Uterus (tissue), 4 donors: ENCODE measurements at regions of chr16 and their contacts with region 1.

Region 1: GRCh38 chr16:2155091-2156021 is at the start of gene TRAF7:
- DNase-seq: peak; percentile 98 to 100
- H3K4me3 ChIP-seq: peak within 1 kb of the TSS; percentile 66 to 92
- H3K27ac ChIP-seq: peak within 1 kb of the TSS; percentile 76 to 83
- H3K4me1 ChIP-seq: peaks cover 5 to 36% of the 10 kb centered on the region in 2 donors
- H3K27me3 ChIP-seq: no peaks in the 10 kb centered on the region
- CTCF ChIP-seq: peak in 1 of 4 experiments; percentile 36
- POLR2A ChIP-seq: peak; percentile 97
- total RNA-seq, gene TRAF7: 15.3 to 97.1 (median 51.7) TPM

Region 2: GRCh38 chr16:2102471-2102870 is 52.9 kb before region 1 on chr16:
- intact Hi-C with region 1: loop called (anchors 10 kb)
- DNase-seq: no peak
- H3K4me3 ChIP-seq: no peak overlapping the region
- H3K27ac ChIP-seq: no peak overlapping the region
- H3K4me1 ChIP-seq: no peaks in the 10 kb centered on the region
- H3K27me3 ChIP-seq: no peaks in the 10 kb centered on the region
- CTCF ChIP-seq: no peak
- POLR2A ChIP-seq: no peak

Region 3: GRCh38 chr16:2213817-2214720 is 58.7 kb after region 1 on chr16:
- intact Hi-C with region 1: loop called (anchors 10 kb)
- DNase-seq: no peak
- H3K4me3 ChIP-seq: peak overlapping the region; percentile 23 to 74
- H3K27ac ChIP-seq: peak overlapping the region; percentile 13 to 71
- H3K4me1 ChIP-seq: peaks cover 0 to 12% of the 10 kb centered on the region in 2 donors
- H3K27me3 ChIP-seq: no peaks in the 10 kb centered on the region
- CTCF ChIP-seq: no peak
- POLR2A ChIP-seq: peak in 1 of 2 donors; percentile 30